Astrocyte of the cerebellum (primary cell): ENCODE measurements at regions of chr15 and their contacts with region 1.

Region 1: GRCh38 chr15:73956739-73957051 is 30.4 kb downstream of the LOXL1 start:
- DNase-seq: peak; percentile 84
- H3K4me3 ChIP-seq: no peak overlapping the region
- CTCF ChIP-seq: no peak

Region 2: GRCh38 chr15:74040109-74040850 is 83.6 kb after region 1 on chr15:
- in situ Hi-C with region 1: loop called (anchors 5 kb)
- DNase-seq: peak; percentile 97
- H3K4me3 ChIP-seq: no peak overlapping the region
- CTCF ChIP-seq: no peak

Region 3: GRCh38 chr15:74134387-74135027 is 177.8 kb after region 1 on chr15:
- in situ Hi-C with region 1: no loop called
- DNase-seq: no peak
- H3K4me3 ChIP-seq: no peak overlapping the region
- CTCF ChIP-seq: peak; percentile 58